ENCODE measurements at regions of chr4 and their contacts with region 1.

Region 1: DNA sequence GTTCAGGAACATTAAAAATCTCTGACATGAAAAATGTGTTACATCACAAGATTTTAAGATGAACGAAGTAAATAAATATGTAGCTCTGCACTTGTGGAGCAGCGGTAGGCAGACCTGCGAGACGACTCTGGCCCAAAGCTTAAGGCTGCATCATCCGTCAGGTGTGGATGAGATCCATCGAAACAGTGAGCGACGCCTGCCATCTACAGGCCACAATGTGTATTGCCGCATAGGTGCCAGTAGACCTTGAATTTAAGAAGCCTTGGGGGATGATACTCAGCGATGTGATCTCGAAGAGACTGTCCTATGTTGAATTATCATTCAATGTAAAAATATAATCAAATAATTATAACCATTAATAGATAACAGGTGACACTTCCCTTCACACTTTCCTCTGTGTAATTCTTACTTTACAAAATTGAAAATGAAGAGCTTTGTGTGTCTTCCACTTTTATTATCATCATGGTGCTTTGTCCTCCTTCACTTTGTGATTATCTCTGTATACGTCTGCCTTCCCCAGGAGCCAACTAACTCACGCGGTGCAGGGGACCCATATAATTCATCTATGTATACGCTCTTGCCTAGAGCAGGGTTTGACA is 851.0 kb downstream of the RAB28 start:
- DNase-seq: peak; percentile 66 to 90 (median 80)
- H3K4me3 ChIP-seq: no peak overlapping the region
- H3K27ac ChIP-seq: no peak overlapping the region
- H3K27me3 ChIP-seq: peaks cover 0 to 16% (median 0%) of the 10 kb centered on the region in 45 donors
- CTCF ChIP-seq: peak; percentile 80 to 97 (median 91)

Region 2: GRCh38 chr4:11765849-11766453 is 867.2 kb before region 1 on chr4:
- intact Hi-C with region 1: loop called in 1 of 2 experiments (anchors 10 kb)
- DNase-seq: peak in 1 of 10 donors; percentile 12
- H3K4me3 ChIP-seq: no peak overlapping the region
- H3K27ac ChIP-seq: no peak overlapping the region
- H3K27me3 ChIP-seq: no peaks in the 10 kb centered on the region
- CTCF ChIP-seq: peak; percentile 50 to 83 (median 70)

Region 3: DNA sequence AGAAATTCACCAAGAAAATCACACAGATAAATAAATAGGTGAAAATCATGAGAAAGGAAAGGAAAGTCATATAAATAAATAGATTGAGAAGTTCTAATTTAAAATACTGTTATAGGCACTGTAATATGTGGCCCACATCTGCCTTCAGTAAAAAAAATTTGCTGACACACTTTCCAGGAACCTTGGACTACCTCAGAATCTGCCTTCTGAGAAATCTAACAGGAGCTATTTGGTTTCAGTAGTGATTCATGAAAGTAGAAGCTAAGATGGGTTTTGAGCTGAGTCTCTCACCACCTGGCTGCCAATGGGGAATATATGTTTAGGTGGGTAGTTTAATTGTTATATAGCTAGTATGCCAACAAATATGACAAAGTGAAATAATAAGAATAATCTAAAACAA is 41.0 kb after region 1 on chr4:
- intact Hi-C with region 1: no loop called
- DNase-seq: no peak
- H3K4me3 ChIP-seq: no peak overlapping the region
- H3K27ac ChIP-seq: no peak overlapping the region
- H3K27me3 ChIP-seq: no peaks in the 10 kb centered on the region
- CTCF ChIP-seq: no peak